ENCODE measurements at regions of chr3 and their contacts with region 1.

Region 1: DNA sequence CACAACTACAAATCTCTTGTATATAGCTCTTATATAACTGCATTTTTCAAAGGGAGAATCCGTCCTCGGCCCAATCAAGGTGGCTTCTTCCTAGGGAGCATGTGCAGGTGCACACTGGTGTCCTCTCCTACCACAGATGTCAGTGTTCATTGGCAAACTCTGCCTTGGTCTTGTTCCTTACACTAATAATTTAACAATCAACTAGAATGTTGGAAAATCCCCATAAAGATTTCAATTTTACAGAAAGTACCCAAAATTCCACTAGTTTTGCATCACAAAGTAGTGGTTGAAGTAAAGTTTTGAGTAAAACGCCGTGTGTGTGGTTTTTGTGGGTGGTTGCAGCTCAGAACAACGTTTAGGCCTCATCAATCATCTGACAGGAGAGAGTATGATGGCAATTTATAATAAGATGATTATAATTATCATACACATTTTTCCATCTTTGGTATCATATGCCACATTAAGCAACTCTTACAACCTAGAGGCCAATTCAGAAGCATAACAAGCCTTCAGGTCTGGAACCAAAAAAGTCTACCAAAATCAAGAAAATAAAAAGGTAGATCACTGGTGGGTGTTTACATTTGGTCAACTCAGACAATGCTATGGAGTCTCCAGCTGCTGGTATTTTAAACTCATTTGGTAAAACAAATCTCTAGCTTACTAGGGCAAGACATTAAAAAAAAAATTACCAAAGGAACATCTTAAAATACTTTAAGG is 128.9 kb upstream of the BHLHE40 start:
- DNase-seq: no peak
- H3K4me3 ChIP-seq: no peak overlapping the region
- H3K27ac ChIP-seq: no peak overlapping the region
- H3K4me1 ChIP-seq: peaks cover 11% of the 10 kb centered on the region
- H3K27me3 ChIP-seq: no peaks in the 10 kb centered on the region
- CTCF ChIP-seq: no peak

Region 2: GRCh38 chr3:4906107-4906621 is 55.8 kb after region 1 on chr3:
- CTCF ChIA-PET with region 1: no interaction called
- dilution Hi-C with region 1: loop called (anchors 5 kb)
- in situ Hi-C with region 1: no loop called
- intact Hi-C with region 1: no loop called
- DNase-seq: peak; percentile 98
- H3K4me3 ChIP-seq: no peak overlapping the region
- H3K27ac ChIP-seq: peak overlapping the region; percentile 82
- H3K4me1 ChIP-seq: peaks cover 21% of the 10 kb centered on the region
- H3K27me3 ChIP-seq: no peaks in the 10 kb centered on the region
- CTCF ChIP-seq: no peak

Region 3: DNA sequence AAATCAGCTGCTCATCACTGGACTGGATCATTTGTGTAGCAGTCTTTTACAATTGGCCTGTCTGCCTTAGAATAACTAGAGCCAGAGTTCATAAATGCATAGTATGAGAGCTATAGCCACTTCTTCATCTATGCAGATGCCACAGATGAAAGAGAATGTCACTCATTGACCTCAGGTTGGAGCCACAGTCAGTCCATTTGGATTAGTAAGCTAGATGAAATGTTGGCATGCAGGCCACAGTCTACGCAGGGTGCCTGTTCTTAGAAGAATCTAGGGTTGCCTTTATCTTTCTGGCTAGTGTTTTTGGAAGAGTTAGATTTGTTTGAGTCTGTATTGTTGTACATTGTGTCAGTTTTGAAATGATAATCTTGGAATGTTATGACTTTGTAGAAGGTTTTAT is 311.7 kb after region 1 on chr3:
- CTCF ChIA-PET with region 1: no interaction called
- dilution Hi-C with region 1: no loop called
- in situ Hi-C with region 1: no loop called
- intact Hi-C with region 1: no loop called
- DNase-seq: peak; percentile 51
- H3K4me3 ChIP-seq: no peak overlapping the region
- H3K27ac ChIP-seq: no peak overlapping the region
- H3K4me1 ChIP-seq: peaks cover 21% of the 10 kb centered on the region
- H3K27me3 ChIP-seq: no peaks in the 10 kb centered on the region
- CTCF ChIP-seq: no peak

Region 4: DNA sequence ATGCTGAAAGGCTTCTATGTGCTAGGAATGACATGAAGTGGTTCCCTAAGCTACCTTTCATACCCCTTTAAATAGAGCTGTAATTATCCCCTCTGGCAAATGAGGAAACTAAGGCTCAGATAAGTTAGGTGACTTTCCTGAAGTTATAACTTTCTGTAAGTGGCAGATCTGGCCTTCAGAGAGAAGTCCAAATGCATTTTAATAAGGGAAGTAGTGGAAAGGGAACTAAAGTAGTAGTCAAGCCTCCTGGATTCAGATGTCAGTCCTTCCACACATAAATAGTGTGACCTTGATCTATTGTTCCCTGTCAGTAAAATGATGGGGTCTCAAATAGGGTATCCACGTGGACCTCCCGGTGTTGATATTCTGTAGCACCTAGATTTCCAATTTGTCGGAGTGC is 614.8 kb after region 1 on chr3:
- CTCF ChIA-PET with region 1: no interaction called
- dilution Hi-C with region 1: no loop called
- in situ Hi-C with region 1: no loop called
- intact Hi-C with region 1: no loop called
- DNase-seq: no peak
- H3K4me3 ChIP-seq: no peak overlapping the region
- H3K27ac ChIP-seq: no peak overlapping the region
- H3K4me1 ChIP-seq: no peaks in the 10 kb centered on the region
- H3K27me3 ChIP-seq: no peaks in the 10 kb centered on the region
- CTCF ChIP-seq: no peak

Measured in mammary epithelial cell (primary cell).